ENCODE measurements at regions of chr10 and their contacts with region 1.

Region 1: DNA sequence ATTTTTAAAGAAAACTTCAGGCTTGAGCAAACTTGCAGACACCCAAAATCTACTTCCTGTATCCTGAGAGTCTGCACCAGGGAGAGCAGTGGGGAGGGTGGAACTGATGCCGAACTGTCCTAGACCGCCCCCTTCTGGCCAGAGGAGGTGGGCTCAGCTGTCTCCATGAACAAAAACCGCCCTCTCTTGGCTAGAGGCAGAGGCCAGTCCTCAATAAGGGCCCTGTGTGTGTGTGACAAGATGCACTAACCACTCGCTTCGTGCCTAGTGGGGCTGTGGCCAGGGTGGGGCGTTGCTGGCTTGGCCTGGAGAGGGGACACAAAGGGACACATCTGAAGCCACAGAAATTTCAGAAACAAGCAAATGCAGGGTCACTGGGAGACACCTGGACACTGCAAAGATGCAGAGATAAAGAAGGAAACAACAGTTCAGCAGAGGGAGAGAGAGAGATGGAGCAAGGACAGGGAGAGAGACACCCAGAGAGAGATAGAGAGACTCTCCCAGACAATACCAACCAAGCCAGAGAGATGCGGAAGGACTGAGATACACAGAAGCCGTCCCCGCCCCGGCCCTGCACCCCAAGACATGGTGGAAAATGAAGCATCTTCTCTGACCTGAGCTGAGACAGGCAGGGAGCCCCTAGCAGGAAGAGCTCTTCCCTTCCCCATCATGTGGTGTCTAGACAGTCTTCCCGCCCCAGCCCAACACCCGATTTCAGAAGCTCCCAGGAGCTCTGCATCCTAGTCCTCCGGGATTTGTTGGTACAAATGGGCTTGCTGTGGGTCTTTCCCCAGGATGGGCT is 22.7 kb upstream of the FXYD4 start:
- DNase-seq: peak; percentile 81 to 85
- ATAC-seq: peak; percentile 93 to 99 (median 98)
- H3K4me3 ChIP-seq: no peak overlapping the region
- H3K27ac ChIP-seq: no peak overlapping the region
- H3K4me1 ChIP-seq: peaks cover 0 to 14% (median 5%) of the 10 kb centered on the region in 9 donors
- H3K27me3 ChIP-seq: peaks cover 0 to 34% (median 17%) of the 10 kb centered on the region in 7 donors
- CTCF ChIP-seq: peak; percentile 68 to 94 (median 89)

Region 2: GRCh38 chr10:43204943-43205671 is 143.6 kb before region 1 on chr10:
- intact Hi-C with region 1: loop called in 3 of 10 experiments (anchors 5 to 10 kb)
- DNase-seq: no peak
- ATAC-seq: peak in 6 of 8 donors; percentile 21 to 66 (median 54)
- H3K4me3 ChIP-seq: no peak overlapping the region
- H3K27ac ChIP-seq: no peak overlapping the region
- H3K4me1 ChIP-seq: peaks cover 0 to 13% (median 8%) of the 10 kb centered on the region in 9 donors
- H3K27me3 ChIP-seq: peaks cover 0 to 20% (median 13%) of the 10 kb centered on the region in 7 donors
- CTCF ChIP-seq: peak in 7 of 9 donors; percentile 62 to 77 (median 69)

Region 3: DNA sequence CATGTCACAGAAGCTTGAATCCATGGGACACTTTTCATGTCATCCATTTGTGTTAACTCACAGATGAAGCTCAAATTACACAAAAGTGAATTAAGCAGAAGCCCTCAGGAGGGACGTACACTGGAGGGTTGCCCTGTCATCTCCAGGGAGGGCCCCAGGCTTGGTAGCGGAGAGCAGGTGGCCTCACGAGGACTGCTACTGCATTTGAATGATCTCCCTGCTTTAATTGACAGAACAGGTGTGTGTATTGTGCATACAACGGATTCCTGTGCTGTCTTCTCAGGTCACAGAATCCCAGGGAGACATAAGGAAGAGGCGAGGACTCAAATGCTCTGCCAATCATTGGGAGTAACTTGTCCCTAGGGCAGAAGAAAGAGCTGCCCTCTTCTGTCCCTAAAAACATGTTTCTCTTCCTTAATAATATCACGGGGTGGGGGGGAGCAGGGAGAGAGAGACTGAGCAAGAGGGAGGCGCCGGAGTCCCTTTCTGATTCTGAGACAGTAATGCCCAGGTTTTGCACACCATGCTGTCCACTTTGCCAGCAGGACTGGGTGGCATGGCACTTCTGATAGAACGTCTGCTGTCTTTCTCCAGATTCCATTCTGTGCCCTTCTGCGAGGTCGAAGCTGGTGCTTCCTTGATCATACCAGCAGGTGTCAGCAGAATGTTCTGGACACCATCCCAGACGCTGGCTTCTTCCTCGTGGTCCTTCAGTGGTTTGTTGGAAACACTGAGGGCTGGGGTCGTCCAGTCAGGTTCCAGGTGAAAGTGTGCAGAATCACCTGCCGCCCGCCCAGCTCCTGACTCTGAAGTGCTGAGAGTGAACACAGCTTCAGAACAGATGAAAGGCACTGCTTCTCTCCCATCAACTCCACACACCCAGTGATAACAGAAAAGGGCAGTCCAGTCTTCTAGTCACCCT is 55.7 kb before region 1 on chr10:
- intact Hi-C with region 1: loop called in 9 of 10 experiments (anchors 1 to 10 kb)
- DNase-seq: peak in 1 of 2 donors; percentile 40
- ATAC-seq: peak; percentile 69 to 89 (median 77)
- H3K4me3 ChIP-seq: no peak overlapping the region
- H3K27ac ChIP-seq: no peak overlapping the region
- H3K4me1 ChIP-seq: peaks cover 0 to 22% (median 0%) of the 10 kb centered on the region in 9 donors
- H3K27me3 ChIP-seq: peaks cover 0 to 55% (median 41%) of the 10 kb centered on the region in 7 donors
- CTCF ChIP-seq: peak; percentile 48 to 80 (median 71)

Measured in heart right ventricle (tissue), 16 donors.